ENCODE measurements at regions of chr18 and their contacts with region 1.

Region 1: DNA sequence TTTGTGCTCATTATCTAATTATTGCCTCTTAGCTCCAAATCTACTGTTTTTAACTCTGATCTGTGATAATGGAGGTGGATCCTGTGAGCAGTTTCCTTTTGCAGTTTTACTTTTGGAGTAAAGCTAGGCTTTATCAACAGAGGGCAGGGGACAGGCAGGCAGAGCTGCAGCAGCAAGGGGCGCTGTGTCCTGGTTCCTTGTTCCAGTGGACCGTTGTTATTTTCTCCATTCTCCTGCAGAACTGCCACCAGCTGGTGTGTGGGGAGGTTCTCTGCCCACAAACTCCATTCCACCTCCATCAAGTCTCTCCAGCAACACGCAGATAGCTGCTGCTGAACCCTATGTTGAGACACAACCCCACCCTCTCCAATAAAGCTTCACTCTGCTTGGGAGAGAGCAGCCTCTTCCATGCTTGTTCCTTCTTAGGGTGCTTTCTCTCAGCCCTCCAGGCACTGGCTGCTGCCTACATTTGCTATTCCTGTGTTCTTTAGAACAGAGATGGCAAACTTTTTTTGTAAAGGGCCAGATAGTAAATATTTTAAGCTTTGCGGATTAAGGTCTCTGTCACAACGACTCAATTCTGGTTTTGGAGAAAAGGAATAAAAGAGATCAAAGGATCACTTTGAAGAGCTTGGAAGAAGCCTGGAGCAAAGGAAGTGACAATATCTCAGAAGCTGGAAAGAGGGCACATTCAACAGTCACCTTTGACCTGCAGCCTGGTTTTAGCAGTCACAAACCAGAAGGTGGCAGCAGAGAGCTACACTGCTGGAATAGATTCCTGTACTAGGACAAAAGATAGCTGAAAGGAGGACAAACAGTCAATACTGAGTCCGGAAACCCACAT is 208.8 kb downstream of the CCDC178 start:
- DNase-seq: peak; percentile 71
- H3K4me3 ChIP-seq: no peak overlapping the region
- H3K27ac ChIP-seq: no peak overlapping the region
- H3K4me1 ChIP-seq: peaks cover 2% of the 10 kb centered on the region
- H3K27me3 ChIP-seq: peaks cover 0 to 2% of the 10 kb centered on the region in 2 experiments
- CTCF ChIP-seq: peak; percentile 82 to 86
- POLR2A ChIP-seq: no peak

Region 2: DNA sequence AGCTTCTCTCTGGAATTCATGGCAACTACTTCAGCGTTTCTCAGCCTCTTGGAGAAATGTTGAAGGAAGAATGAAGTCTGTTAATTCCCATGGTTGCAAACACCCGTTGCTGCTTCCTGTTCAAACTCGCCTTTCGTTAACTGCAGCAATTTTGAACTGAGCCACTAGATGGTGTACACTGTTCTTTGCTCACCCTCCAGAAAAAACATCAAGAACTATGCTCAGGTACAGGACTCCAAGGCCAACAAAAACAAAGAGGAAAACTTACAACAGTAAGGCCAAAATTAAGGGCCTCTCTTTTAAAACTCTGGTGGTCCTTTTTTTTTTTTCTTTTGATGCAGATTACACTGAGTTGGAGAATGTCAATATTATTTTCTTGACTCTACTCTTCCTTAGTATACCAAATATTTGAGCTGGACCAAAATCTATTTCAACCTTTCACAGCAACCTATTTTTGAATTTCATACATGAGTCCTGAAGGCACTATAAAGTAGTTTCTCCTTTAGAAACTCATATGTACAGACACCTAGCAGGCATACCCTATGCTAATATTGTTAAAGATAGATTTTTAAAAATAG is 517.0 kb before region 1 on chr18:
- CTCF ChIA-PET with region 1: interaction called, 19 read pairs
- POLR2A ChIA-PET with region 1: no interaction called
- dilution Hi-C with region 1: no loop called
- intact Hi-C with region 1: no loop called
- DNase-seq: peak; percentile 81
- H3K4me3 ChIP-seq: no peak overlapping the region
- H3K27ac ChIP-seq: no peak overlapping the region
- H3K4me1 ChIP-seq: no peaks in the 10 kb centered on the region
- H3K27me3 ChIP-seq: peaks cover 2 to 5% of the 10 kb centered on the region in 2 experiments
- CTCF ChIP-seq: peak; percentile 67 to 70
- POLR2A ChIP-seq: no peak

Region 3: GRCh38 chr18:33201509-33201926 is 30.2 kb before region 1 on chr18:
- CTCF ChIA-PET with region 1: interaction called, 16 read pairs
- POLR2A ChIA-PET with region 1: no interaction called
- dilution Hi-C with region 1: no loop called
- intact Hi-C with region 1: no loop called
- DNase-seq: peak; percentile 75
- H3K4me3 ChIP-seq: peak overlapping the region in 2 of 3 experiments; percentile 10 to 12
- H3K27ac ChIP-seq: no peak overlapping the region
- H3K4me1 ChIP-seq: peaks cover 2% of the 10 kb centered on the region
- H3K27me3 ChIP-seq: no peaks in the 10 kb centered on the region
- CTCF ChIP-seq: peak; percentile 65 to 77
- POLR2A ChIP-seq: no peak

Region 4: GRCh38 chr18:33440060-33441043 is 208.7 kb after region 1 on chr18 and contains the start of gene CCDC178:
- CTCF ChIA-PET with region 1: interaction called, 3 read pairs
- POLR2A ChIA-PET with region 1: no interaction called
- dilution Hi-C with region 1: no loop called
- intact Hi-C with region 1: loop called (anchors 5 kb)
- DNase-seq: peak; percentile 46
- H3K4me3 ChIP-seq: peak within 1 kb of the TSS; percentile 37 to 56 (median 45)
- H3K27ac ChIP-seq: no peak within 1 kb of the TSS
- H3K4me1 ChIP-seq: no peaks in the 10 kb centered on the region
- H3K27me3 ChIP-seq: peaks cover 8 to 38% of the 10 kb centered on the region in 2 experiments
- CTCF ChIP-seq: peak; percentile 25 to 59
- POLR2A ChIP-seq: no peak
- total RNA-seq, gene CCDC178: 0.80 and 1.3 TPM in 2 replicates

Region 5: GRCh38 chr18:33673689-33674088 is 442.0 kb after region 1 on chr18:
- CTCF ChIA-PET with region 1: interaction called, 21 read pairs
- POLR2A ChIA-PET with region 1: no interaction called
- dilution Hi-C with region 1: no loop called
- intact Hi-C with region 1: loop called (anchors 1 kb)
- DNase-seq: peak; percentile 30
- H3K4me3 ChIP-seq: no peak overlapping the region
- H3K27ac ChIP-seq: no peak overlapping the region
- H3K4me1 ChIP-seq: no peaks in the 10 kb centered on the region
- H3K27me3 ChIP-seq: no peaks in the 10 kb centered on the region
- CTCF ChIP-seq: no peak
- POLR2A ChIP-seq: no peak

Region 6: GRCh38 chr18:34322365-34323289 is 1090.9 kb after region 1 on chr18:
- CTCF ChIA-PET with region 1: interaction called, 10 read pairs
- POLR2A ChIA-PET with region 1: no interaction called
- dilution Hi-C with region 1: no loop called
- intact Hi-C with region 1: no loop called
- DNase-seq: peak; percentile 65
- H3K4me3 ChIP-seq: no peak overlapping the region
- H3K27ac ChIP-seq: no peak overlapping the region
- H3K4me1 ChIP-seq: no peaks in the 10 kb centered on the region
- H3K27me3 ChIP-seq: peaks cover 0 to 5% of the 10 kb centered on the region in 2 experiments
- CTCF ChIP-seq: peak; percentile 66 to 71
- POLR2A ChIP-seq: no peak

Measured in endothelial cell of umbilical vein (primary cell).